ENCODE measurements at regions of chr11 and their contacts with region 1.

Region 1: DNA sequence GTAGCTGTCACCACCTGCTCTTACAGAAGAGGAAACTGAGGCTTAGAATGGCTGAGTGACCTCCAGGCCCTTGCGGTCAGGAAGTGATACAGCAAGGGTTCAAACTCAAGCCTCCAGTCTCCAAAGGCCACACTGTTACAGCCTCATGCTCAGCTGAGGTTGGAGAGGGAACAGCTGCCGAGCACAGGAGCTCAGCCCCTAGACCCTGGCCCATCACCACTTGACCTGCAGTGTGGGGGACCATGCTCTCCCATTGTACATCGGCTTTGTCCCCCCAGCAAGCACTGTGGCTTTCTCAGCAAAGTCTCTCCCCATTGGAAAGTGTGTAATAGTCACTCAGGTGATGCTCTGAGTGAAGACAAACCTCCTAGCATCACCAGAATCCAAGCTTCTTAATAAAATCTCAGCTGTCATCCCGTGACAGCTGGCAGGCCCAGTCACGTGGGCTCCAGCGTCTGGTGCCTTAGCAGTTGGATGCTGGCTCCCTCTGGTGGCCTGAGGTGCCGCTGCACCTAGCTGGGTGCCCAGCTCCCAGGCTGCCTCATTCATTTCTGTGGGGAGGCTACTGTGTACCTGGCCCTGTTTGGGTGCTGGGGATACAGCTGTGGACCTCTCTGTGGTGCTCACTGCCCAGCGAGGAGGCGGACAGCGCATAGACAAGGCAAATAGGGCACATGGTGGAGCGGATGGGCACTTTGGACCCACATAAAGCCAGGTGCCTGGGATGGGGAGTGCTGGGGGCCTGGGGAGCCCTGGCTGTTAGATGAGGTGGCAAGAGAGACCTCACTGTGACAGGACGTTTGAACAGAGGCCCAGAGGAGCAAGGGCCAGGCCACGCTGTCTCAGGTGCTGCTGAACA is 19.1 kb upstream of the MYRF start:
- DNase-seq: peak; percentile 80 to 85 (median 82)
- H3K4me3 ChIP-seq: no peak overlapping the region
- H3K4me3 Mint-ChIP-seq: no peak overlapping the region
- H3K27ac ChIP-seq: no peak overlapping the region
- H3K27ac Mint-ChIP-seq: peak overlapping the region in 4 of 7 donors; percentile 84 to 90 (median 88)
- H3K4me1 ChIP-seq: peaks cover 4% of the 10 kb centered on the region
- H3K4me1 Mint-ChIP-seq: peaks cover 2 to 9% (median 5%) of the 10 kb centered on the region in 4 donors
- H3K27me3 ChIP-seq: no peaks in the 10 kb centered on the region
- H3K27me3 Mint-ChIP-seq: no peaks in the 10 kb centered on the region

Region 2: DNA sequence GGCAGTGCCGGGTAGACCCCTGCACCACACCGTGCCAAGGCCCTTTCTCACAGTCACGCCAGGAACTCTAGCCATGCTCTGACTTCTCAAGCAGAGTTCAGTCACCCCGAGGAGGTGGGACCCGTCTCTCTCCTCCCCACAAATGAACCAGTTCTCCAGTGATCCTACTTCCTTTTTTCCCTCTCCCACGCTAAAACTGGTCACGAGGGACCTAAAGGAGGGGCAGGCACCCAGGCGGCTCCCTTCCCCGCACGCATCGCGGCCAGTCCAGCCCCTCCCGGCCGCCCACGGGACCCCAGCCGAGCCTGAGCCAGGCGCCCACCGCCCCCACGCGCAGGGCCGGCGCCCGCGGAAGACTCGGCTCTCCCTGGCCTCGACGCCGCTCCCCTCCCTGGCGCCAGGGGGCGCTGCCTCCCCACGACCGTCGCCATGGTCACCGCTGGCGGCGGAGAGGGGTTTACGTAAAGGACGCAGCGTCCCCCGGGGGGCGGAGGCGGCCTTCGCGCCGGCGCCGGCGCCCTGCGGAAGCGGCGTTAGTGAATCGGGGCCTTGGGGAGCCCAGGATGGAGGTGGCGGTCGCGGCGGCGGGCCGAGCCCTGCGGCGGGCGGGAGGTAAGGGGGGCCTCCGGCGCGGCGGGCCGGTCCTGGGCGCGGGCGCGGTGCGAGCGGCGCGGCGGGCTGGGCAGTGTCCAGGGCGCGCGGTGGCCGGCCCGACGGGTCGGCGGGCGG is 53.3 kb before region 1 on chr11 and contains the start of gene DAGLA:
- CTCF ChIA-PET with region 1: interaction called, 64 read pairs
- POLR2A ChIA-PET with region 1: interaction called, 14 read pairs
- intact Hi-C with region 1: loop called (anchors 1 kb)
- DNase-seq: peak; percentile 71 to 82 (median 72)
- H3K4me3 ChIP-seq: peak within 1 kb of the TSS in 1 of 2 donors; percentile 19
- H3K4me3 Mint-ChIP-seq: peak within 1 kb of the TSS; percentile 69 to 83 (median 75)
- H3K27ac ChIP-seq: no peak within 1 kb of the TSS
- H3K27ac Mint-ChIP-seq: peak within 1 kb of the TSS in 6 of 7 donors; percentile 28 to 91 (median 52)
- H3K4me1 ChIP-seq: peaks cover 22% of the 10 kb centered on the region
- H3K4me1 Mint-ChIP-seq: peaks cover 0 to 14% (median 6%) of the 10 kb centered on the region in 4 donors
- H3K27me3 ChIP-seq: no peaks in the 10 kb centered on the region
- H3K27me3 Mint-ChIP-seq: peaks cover 4 to 16% of the 10 kb centered on the region in 2 donors
- total RNA-seq, gene DAGLA: 0.30 to 0.44 TPM

Region 3: DNA sequence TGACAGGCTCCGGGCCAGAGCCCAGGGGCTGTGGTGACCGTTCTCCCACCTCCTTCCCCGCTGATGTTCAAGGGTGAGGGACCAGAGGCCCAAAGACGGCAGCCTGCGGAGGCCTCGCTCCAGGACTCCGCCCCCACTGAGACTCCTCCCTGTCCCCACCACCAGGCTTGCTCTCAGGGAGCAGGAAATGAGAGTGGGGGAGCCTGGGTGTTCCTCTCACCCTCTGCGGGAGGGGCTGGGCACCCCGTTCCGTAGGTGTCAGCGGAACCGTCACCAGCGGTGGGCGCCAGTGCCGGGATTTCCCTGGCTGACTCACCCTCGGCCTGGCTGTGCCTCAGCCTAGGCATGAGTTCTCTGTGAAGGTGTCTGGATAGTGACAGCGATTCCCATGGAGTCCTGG is 37.4 kb before region 1 on chr11:
- CTCF ChIA-PET with region 1: interaction called, 19 read pairs
- POLR2A ChIA-PET with region 1: no interaction called
- intact Hi-C with region 1: loop called (anchors 5 kb)
- DNase-seq: peak; percentile 89 to 98 (median 92)
- H3K4me3 ChIP-seq: peak overlapping the region in 1 of 2 donors; percentile 40
- H3K4me3 Mint-ChIP-seq: peak overlapping the region; percentile 61 to 83 (median 76)
- H3K27ac ChIP-seq: peak overlapping the region; percentile 55
- H3K27ac Mint-ChIP-seq: peak overlapping the region; percentile 88 to 97 (median 94)
- H3K4me1 ChIP-seq: peaks cover 34% of the 10 kb centered on the region
- H3K4me1 Mint-ChIP-seq: peaks cover 12 to 29% (median 22%) of the 10 kb centered on the region in 4 donors
- H3K27me3 ChIP-seq: no peaks in the 10 kb centered on the region
- H3K27me3 Mint-ChIP-seq: no peaks in the 10 kb centered on the region

Region 4: DNA sequence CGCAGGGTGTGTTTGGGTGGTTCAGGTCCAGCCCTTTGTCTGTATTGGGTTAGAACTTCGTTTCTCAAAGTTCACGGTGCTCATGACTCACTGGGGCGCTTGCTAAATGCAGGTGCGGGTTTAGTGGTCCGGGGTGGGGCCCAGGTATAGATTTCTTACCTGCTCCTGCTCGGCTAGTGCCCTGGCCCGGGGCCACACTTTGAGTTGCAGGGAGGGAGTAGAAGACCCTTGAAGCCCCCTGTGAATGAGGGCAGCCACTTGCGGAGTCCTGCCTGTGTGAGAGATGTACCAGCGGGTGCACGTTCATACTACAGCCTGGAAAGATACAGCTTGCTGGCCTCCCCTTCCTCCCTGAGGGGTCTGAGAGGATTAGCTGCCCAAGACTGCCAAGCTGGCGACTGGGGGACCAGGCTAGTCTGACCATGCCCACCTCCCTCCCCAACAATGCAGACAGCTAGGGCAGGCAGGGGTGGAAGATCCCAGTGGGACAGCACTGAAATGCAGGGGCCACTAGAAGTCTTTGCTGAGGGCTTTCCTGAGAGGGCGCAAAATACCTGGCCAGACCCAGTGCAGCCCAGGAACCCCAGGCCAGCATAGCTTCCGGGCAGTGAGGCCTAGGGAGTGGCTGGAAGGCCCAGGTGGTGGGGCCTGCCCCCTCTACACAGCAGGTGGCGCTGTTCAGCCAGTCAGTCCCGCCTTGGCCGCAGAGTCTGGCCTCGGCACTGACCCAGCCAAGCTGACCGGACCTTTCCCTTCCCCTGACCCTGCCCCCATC is 14.0 kb after region 1 on chr11:
- CTCF ChIA-PET with region 1: interaction called, 10 read pairs
- POLR2A ChIA-PET with region 1: no interaction called
- intact Hi-C with region 1: no loop called
- DNase-seq: peak in 2 of 5 donors; percentile 18 to 26
- H3K4me3 ChIP-seq: no peak overlapping the region
- H3K4me3 Mint-ChIP-seq: no peak overlapping the region
- H3K27ac ChIP-seq: no peak overlapping the region
- H3K27ac Mint-ChIP-seq: peak overlapping the region in 1 of 7 donors; percentile 12
- H3K4me1 ChIP-seq: peaks cover 7% of the 10 kb centered on the region
- H3K4me1 Mint-ChIP-seq: peaks cover 2 to 11% (median 5%) of the 10 kb centered on the region in 4 donors
- H3K27me3 ChIP-seq: no peaks in the 10 kb centered on the region
- H3K27me3 Mint-ChIP-seq: peaks cover 11 to 12% of the 10 kb centered on the region in 2 donors

Region 5: GRCh38 chr11:62591448-62592145 is 858.2 kb after region 1 on chr11 and contains the start of gene TUT1:
- CTCF ChIA-PET with region 1: no interaction called
- POLR2A ChIA-PET with region 1: no interaction called
- intact Hi-C with region 1: no loop called
- DNase-seq: peak; percentile 96 to 98 (median 98)
- H3K4me3 ChIP-seq: peak within 1 kb of the TSS; percentile 69 to 87
- H3K4me3 Mint-ChIP-seq: peak within 1 kb of the TSS; percentile 89 to 98 (median 95)
- H3K27ac ChIP-seq: peak within 1 kb of the TSS; percentile 87
- H3K27ac Mint-ChIP-seq: peak within 1 kb of the TSS; percentile 87 to 98 (median 98)
- H3K4me1 ChIP-seq: peaks cover 43% of the 10 kb centered on the region
- H3K4me1 Mint-ChIP-seq: peaks cover 26 to 69% (median 44%) of the 10 kb centered on the region in 4 donors
- H3K27me3 ChIP-seq: no peaks in the 10 kb centered on the region
- H3K27me3 Mint-ChIP-seq: no peaks in the 10 kb centered on the region
- total RNA-seq, gene TUT1: 37.7 to 38.1 TPM